ENCODE measurements at regions of chr9 and their contacts with region 1.

Region 1: GRCh38 chr9:92634712-92635605 is 35.0 kb downstream of the IPPK start:
- DNase-seq: peak; percentile 88
- ATAC-seq: peak; percentile 94

Region 2: GRCh38 chr9:92140074-92140753 is 494.7 kb before region 1 on chr9:
- intact Hi-C with region 1: loop called (anchors 10 kb)
- DNase-seq: peak; percentile 87
- ATAC-seq: peak; percentile 80